ENCODE measurements at regions of chr17 and their contacts with region 1.

Region 1: DNA sequence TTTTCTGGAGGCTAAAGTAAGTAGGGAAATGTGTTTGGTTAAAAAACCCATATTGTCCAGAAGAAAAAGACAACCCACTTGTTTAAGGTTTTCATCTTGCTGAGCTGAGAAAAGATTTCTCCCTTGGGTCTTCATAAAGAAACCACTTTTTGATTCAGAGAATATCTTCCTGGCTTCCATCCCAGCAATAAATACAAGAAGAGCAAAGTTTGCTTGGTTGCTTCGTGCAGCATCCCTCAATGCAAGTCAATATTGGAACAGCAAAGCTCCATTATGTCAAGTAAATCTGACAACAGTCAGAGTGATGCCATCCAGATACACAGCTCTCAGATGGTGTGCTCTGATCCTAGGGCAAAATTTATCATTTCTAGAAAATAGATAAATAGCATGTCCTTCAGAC is 118.9 kb upstream of the PIRT start:
- DNase-seq: no peak

Region 2: DNA sequence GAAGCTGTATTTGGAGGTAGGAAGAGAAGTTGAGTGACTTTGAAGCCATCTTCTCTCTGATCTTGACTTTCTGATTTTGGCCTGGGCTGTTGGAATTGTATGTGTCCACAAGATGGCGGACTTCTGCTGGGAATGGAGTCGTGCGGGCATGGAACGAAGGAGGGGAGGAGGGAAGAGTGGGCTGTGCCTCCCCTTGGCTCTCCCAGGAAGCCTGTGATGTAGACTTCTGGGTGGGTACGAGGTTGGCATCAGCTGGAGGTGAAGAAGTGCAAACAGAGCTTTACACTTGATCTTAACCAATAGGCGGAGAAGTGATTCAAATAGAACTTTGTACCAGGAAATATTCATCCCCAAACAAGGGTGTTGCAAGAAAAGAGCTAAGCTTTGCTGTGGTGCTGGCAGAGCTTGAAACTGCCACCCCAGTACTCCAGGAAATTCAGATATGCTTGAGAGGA is 219.6 kb before region 1 on chr17:
- intact Hi-C with region 1: no loop called
- DNase-seq: peak; percentile 76

Region 3: DNA sequence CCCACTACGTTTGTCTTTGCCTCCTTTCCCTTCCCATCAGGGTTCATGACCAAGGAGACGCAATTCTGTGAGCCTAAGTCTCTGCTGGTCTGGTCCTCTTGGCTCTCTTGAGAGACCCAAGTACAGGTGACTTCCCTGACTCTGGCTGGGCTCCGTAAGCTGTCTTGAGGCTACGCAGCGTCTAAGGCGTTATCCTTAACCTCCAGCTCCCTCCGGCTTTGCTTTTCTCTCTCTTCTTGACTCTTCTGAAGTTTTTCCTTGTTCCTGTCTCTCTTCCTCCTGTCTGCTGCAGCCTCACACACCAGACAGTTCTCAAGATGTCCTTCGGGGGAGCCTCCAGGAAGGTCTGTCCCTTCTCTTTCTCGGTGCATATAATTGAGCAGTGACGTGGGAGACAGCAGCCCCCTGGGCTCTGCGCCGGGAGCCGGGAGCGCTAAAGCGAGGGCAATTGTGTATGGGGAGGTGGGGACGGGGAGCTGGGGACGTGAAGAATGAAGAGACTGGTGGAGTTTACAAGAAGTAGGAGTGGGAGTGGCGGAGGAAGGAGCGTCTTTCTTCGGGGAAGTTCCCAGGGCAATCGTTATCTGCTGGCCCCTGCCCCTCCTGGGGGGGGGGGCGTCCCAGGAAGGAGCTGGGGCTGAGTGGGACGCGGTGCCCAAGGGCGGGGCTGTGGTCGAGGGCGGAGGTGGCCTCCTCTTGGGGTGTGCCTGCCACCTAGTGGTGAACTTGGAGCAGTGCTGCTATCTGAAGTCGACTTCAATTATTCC is 112.0 kb before region 1 on chr17:
- intact Hi-C with region 1: no loop called
- DNase-seq: peak; percentile 91

Region 4: DNA sequence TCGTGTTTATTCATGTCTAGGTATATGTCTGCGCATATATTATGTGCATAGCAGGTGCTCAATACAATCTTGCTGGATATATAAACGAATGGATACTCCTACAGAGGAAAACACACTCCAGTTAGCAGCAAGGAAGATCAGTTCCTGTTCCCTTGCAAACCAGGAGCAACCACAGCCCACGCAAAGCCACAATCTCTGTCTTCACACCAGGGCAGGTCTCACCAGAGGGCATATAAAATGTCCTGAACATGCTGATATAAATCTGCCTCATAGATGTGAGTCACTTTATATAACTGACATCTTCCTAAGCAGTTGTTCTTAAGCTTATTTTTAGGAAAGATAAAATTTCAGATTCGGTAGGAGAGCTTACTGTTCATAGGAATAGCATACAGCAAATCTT is 17.5 kb before region 1 on chr17:
- intact Hi-C with region 1: no loop called
- DNase-seq: no peak

Region 5: GRCh38 chr17:10984220-10984619 is 27.4 kb after region 1 on chr17:
- intact Hi-C with region 1: loop called in 1 of 2 experiments (anchors 2 kb)
- DNase-seq: no peak

Measured in posterior vena cava (tissue), 2 donors.